CD4-positive, alpha-beta memory T cell (primary cell): ENCODE measurements at regions of chr17 and their contacts with region 1.

Region 1: DNA sequence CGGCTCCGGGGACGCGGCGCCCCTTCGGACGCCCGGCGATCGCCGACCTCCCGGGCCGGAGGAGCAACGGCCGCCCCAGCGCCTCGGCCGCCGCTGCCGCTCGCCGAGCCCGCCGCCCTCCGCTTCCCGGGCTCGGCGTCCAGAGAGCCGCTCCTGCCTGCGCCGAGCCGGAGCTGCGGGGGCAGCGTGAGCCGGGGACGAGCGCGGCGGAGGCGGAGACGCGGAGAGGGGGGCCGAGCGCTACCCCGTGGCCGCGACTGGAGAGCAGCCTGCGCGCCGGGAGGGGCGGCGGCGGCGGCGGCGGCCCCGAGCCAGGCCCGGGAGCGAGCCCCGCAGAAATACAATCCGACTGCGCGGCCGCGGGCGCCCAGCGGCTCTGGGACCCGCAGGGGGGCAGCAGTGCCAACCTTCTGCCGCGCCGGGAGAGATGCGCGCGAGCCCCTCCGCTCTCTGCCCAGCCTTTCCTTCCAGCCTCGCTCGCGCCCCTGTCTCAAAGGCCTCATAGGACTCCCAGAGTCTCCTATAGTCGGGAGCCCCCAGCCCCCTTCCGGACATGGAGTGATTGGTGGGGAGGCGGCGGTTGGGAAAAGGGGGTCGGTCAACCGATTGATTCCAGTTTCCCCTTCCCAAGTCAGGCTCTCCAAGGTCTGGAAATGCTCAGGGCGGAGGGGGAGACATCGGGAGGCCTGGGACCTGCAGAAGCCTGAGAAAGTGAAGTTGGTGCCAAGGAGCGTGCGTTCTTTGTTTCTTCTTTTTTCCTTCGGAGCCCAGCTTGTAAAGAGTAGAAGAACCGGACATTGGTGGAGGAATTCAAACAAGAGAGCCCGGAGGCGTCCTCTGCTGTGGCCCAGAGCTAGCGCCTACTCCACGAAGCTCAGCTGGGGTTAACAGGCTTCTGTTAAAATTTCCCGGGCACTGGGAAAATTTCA is 1.1 kb upstream of the SDK2 start:
- DNase-seq: peak in 3 of 5 donors; percentile 17 to 33 (median 29)
- H3K4me3 ChIP-seq: no peak overlapping the region
- H3K4me3 Mint-ChIP-seq: peak overlapping the region; percentile 20 to 69 (median 55)
- H3K27ac ChIP-seq: no peak overlapping the region
- H3K27ac Mint-ChIP-seq: no peak overlapping the region
- H3K4me1 ChIP-seq: peaks cover 5% of the 10 kb centered on the region
- H3K4me1 Mint-ChIP-seq: peaks cover 7 to 20% (median 15%) of the 10 kb centered on the region in 4 donors
- H3K27me3 ChIP-seq: peaks cover 11% of the 10 kb centered on the region
- H3K27me3 Mint-ChIP-seq: peaks cover 15 to 27% of the 10 kb centered on the region in 2 donors

Region 2: DNA sequence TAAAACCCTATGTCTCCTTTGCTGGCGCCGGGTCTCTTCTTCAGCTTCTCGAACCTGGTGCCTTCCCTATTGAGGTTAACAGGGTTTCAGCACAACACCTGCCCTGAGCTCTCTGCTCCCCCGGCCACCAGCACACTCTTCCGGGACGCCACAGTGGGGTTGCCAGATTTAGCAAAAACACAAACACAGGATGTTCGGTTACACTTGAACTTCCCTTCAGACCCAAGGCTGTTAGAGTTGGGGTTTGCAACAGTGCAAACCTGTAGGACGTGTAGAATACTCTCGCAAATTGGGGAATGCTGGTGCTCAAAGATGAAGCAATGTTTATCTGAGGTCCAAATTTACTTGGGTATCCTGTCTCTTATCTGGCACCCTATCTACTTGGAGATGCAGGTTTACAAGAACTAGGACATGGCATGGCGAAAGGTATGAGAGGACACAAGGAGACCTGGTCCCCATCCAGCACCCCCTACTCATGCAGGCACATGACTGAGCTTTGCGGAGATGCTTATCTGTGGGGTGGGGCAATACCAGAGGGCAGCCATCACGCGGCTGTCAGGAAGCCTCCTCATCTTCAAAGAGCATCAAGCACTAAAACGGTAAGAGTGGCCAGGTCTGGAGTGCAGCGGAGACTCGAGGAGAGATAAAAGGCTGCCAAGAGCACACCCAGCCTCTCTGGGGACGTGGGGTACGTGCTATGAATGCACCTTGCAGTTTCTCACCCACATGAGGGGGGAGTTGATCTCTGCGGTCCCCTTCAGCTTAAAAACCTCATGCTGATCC is 53.8 kb before region 1 on chr17:
- CTCF ChIA-PET with region 1: interaction called, 7 read pairs
- POLR2A ChIA-PET with region 1: interaction called, 5 read pairs
- intact Hi-C with region 1: loop called (anchors 2 kb)
- DNase-seq: peak; percentile 56 to 76 (median 71)
- H3K4me3 ChIP-seq: peak overlapping the region in 1 of 2 donors; percentile 47
- H3K4me3 Mint-ChIP-seq: peak overlapping the region; percentile 77 to 87 (median 82)
- H3K27ac ChIP-seq: peak overlapping the region; percentile 27
- H3K27ac Mint-ChIP-seq: peak overlapping the region; percentile 88 to 95 (median 92)
- H3K4me1 ChIP-seq: peaks cover 63% of the 10 kb centered on the region
- H3K4me1 Mint-ChIP-seq: peaks cover 48 to 90% (median 62%) of the 10 kb centered on the region in 4 donors
- H3K27me3 ChIP-seq: no peaks in the 10 kb centered on the region
- H3K27me3 Mint-ChIP-seq: no peaks in the 10 kb centered on the region

Region 3: GRCh38 chr17:73628642-73629552 is 16.4 kb before region 1 on chr17:
- CTCF ChIA-PET with region 1: no interaction called
- POLR2A ChIA-PET with region 1: no interaction called
- intact Hi-C with region 1: no loop called
- DNase-seq: no peak
- H3K4me3 ChIP-seq: no peak overlapping the region
- H3K4me3 Mint-ChIP-seq: no peak overlapping the region
- H3K27ac ChIP-seq: no peak overlapping the region
- H3K27ac Mint-ChIP-seq: no peak overlapping the region
- H3K4me1 ChIP-seq: no peaks in the 10 kb centered on the region
- H3K4me1 Mint-ChIP-seq: no peaks in the 10 kb centered on the region
- H3K27me3 ChIP-seq: no peaks in the 10 kb centered on the region
- H3K27me3 Mint-ChIP-seq: no peaks in the 10 kb centered on the region

Region 4: DNA sequence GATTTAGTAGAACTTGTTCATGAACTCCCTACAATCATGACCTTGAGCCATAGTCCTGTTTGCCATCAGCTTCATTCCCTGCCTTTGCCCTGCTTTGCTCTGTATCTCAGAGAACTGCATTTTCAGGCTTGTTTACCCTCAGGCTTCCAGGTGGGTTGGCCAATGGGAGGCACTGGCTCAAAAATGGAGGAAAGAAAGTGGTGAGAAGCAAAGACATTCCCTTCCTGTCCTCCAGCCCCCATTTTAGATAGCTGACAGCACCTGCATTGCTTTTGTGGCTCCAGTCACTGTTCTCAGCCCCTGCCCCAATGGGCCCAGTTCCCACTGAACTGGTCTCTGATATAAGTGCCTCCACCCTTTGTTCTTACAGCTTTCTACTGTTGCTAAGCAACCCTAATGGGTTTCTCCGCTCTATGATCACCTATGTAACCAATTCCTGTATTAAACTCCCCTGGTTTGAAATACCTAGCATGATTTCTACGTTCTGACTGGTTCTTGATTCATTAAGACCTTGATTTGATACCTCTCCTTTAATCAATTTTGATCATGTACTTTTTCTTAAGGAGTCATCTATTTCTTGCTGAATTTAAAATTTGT is 18.3 kb after region 1 on chr17:
- CTCF ChIA-PET with region 1: no interaction called
- POLR2A ChIA-PET with region 1: no interaction called
- intact Hi-C with region 1: no loop called
- DNase-seq: no peak
- H3K4me3 ChIP-seq: no peak overlapping the region
- H3K4me3 Mint-ChIP-seq: no peak overlapping the region
- H3K27ac ChIP-seq: no peak overlapping the region
- H3K27ac Mint-ChIP-seq: no peak overlapping the region
- H3K4me1 ChIP-seq: peaks cover 22% of the 10 kb centered on the region
- H3K4me1 Mint-ChIP-seq: peaks cover 18 to 25% (median 22%) of the 10 kb centered on the region in 4 donors
- H3K27me3 ChIP-seq: no peaks in the 10 kb centered on the region
- H3K27me3 Mint-ChIP-seq: peaks cover 7 to 9% of the 10 kb centered on the region in 2 donors

Region 5: DNA sequence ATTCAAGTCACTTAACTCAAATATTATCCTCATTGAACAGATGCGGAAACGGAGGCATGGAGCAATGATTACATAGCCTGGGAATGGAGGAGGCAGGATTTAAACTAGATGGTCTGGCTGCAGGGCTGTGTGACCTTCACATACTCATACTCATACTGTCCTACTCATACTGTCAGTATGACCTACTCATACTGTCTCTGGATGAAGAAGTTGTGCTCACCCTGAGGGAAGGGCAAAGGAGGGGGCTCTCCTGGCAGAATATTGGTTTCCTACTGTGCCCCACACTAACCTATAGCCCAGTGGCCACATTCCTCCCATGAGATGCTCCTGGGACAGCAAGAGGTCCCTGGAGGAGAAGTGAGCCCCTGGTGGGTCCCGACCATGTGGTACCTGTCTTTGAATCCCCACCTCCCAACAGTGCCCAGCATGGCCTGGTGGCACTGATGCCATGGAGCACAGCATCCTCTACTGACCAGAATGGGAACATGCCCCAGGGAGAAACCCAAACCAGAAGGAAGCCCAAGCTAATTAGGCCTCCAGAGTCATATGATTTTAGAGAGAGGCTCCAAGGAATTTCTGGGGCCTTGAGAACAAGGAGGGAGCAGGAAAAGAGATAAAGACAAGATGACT is 196.2 kb after region 1 on chr17:
- CTCF ChIA-PET with region 1: interaction called, 3 read pairs
- POLR2A ChIA-PET with region 1: no interaction called
- intact Hi-C with region 1: loop called (anchors 1 kb)
- DNase-seq: no peak
- H3K4me3 ChIP-seq: no peak overlapping the region
- H3K4me3 Mint-ChIP-seq: no peak overlapping the region
- H3K27ac ChIP-seq: no peak overlapping the region
- H3K27ac Mint-ChIP-seq: peak overlapping the region in 4 of 7 donors; percentile 11 to 80 (median 69)
- H3K4me1 ChIP-seq: no peaks in the 10 kb centered on the region
- H3K4me1 Mint-ChIP-seq: peaks cover 5 to 8% (median 7%) of the 10 kb centered on the region in 4 donors
- H3K27me3 ChIP-seq: no peaks in the 10 kb centered on the region
- H3K27me3 Mint-ChIP-seq: peaks cover 0 to 5% of the 10 kb centered on the region in 2 donors

Region 6: GRCh38 chr17:73939806-73940493 is 294.6 kb after region 1 on chr17:
- CTCF ChIA-PET with region 1: no interaction called
- POLR2A ChIA-PET with region 1: no interaction called
- intact Hi-C with region 1: no loop called
- DNase-seq: no peak
- H3K4me3 ChIP-seq: no peak overlapping the region
- H3K4me3 Mint-ChIP-seq: no peak overlapping the region
- H3K27ac ChIP-seq: no peak overlapping the region
- H3K27ac Mint-ChIP-seq: no peak overlapping the region
- H3K4me1 ChIP-seq: no peaks in the 10 kb centered on the region
- H3K4me1 Mint-ChIP-seq: no peaks in the 10 kb centered on the region
- H3K27me3 ChIP-seq: no peaks in the 10 kb centered on the region
- H3K27me3 Mint-ChIP-seq: peaks cover 4 to 12% of the 10 kb centered on the region in 2 donors

Region 7: GRCh38 chr17:73956669-73957465 is 311.6 kb after region 1 on chr17:
- CTCF ChIA-PET with region 1: interaction called, 3 read pairs
- POLR2A ChIA-PET with region 1: no interaction called
- intact Hi-C with region 1: loop called (anchors 5 kb)
- DNase-seq: peak; percentile 38 to 57 (median 44)
- H3K4me3 ChIP-seq: no peak overlapping the region
- H3K4me3 Mint-ChIP-seq: peak overlapping the region in 1 of 8 donors; percentile 24
- H3K27ac ChIP-seq: no peak overlapping the region
- H3K27ac Mint-ChIP-seq: no peak overlapping the region
- H3K4me1 ChIP-seq: peaks cover 18% of the 10 kb centered on the region
- H3K4me1 Mint-ChIP-seq: peaks cover 0 to 8% (median 3%) of the 10 kb centered on the region in 4 donors
- H3K27me3 ChIP-seq: peaks cover 3% of the 10 kb centered on the region
- H3K27me3 Mint-ChIP-seq: peaks cover 3 to 5% of the 10 kb centered on the region in 2 donors